Calu3 (cell line): ENCODE measurements at regions of chr20 and their contacts with region 1.

Region 1: GRCh38 chr20:58944589-58945008 is 36.5 kb upstream of the NELFCD start:
- DNase-seq: peak; percentile 80
- H3K4me3 Mint-ChIP-seq: peak overlapping the region; percentile 37
- H3K27ac Mint-ChIP-seq: peak overlapping the region; percentile 87
- H3K4me1 Mint-ChIP-seq: peaks cover 15% of the 10 kb centered on the region
- H3K27me3 Mint-ChIP-seq: no peaks in the 10 kb centered on the region
- CTCF ChIP-seq: no peak

Region 2: GRCh38 chr20:58650776-58651558 is 293.6 kb before region 1 on chr20 and contains the start of gene STX16:
- CTCF ChIA-PET with region 1: no interaction called
- intact Hi-C with region 1: no loop called
- DNase-seq: peak; percentile 96
- H3K4me3 Mint-ChIP-seq: peak within 1 kb of the TSS; percentile 97
- H3K27ac Mint-ChIP-seq: peak within 1 kb of the TSS; percentile 83
- H3K4me1 Mint-ChIP-seq: peaks cover 19% of the 10 kb centered on the region
- H3K27me3 Mint-ChIP-seq: no peaks in the 10 kb centered on the region
- CTCF ChIP-seq: peak; percentile 96
- total RNA-seq, gene STX16: 86.0 and 99.7 TPM in 2 replicates

Region 3: DNA sequence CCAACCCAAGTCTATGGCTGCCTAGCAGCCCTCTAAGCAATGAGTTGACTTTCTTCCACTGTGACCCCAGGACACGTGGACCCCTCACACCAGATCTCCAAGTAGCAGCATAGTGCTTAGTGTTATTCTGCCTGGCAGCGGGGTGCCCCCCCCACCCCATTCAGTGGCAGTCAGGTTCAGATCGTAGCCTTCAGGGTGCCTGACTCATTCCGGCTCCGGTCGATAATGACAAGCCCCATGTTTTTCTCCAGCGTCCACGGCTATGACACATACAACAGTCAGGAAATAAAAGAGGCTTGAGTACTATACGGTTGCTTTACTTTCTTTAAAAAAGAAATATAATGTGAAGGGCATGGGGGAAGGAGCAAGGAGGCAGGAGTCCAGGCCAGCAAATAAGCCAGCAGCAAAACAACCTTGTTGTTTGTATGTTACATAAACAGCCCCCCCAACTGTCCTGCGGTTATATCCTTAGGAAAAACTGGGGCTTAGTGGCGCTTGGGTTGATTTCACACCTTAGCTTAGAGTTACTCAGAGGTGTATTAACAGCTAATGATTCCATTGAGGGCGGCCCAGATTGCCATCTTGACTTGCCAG is 69.0 kb before region 1 on chr20:
- CTCF ChIA-PET with region 1: no interaction called
- intact Hi-C with region 1: loop called (anchors 1 kb)
- DNase-seq: peak; percentile 88
- H3K4me3 Mint-ChIP-seq: peak overlapping the region; percentile 29
- H3K27ac Mint-ChIP-seq: peak overlapping the region; percentile 64
- H3K4me1 Mint-ChIP-seq: peaks cover 22% of the 10 kb centered on the region
- H3K27me3 Mint-ChIP-seq: no peaks in the 10 kb centered on the region
- CTCF ChIP-seq: no peak

Region 4: DNA sequence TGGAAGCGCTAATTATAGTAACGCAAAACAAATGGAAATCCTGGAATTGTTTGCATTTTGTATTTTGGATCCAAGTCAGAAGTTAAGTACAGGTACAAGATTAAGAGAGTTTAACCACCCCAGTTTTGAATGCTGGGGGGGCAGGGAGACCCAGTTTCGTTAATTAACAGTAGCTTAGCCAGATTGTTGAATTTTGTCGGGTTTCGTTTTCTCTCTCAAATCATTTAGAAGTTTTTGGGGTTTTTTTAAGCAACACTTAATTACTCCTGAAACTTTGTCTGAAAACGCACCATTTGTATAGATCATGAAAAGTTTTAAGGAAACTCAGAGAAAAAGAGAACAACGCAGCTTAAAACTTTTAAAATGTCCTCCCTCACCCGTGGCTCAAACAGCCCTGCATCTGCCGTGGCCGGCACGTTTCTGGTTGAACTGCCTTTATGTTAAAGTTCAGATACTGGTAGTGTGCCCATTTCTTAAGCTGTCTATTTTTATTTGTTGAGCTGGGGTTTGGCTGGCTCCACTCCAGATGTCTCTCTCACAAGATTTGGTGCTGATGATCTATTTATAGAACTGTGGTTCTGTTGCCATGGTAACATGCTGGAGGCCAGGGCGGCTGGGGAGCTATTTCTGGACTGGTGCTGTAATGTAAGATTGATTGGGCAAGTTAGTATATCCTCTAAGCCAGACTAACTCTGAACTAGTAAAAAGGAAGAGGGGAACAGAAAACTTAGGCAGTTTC is 37.0 kb before region 1 on chr20:
- CTCF ChIA-PET with region 1: no interaction called
- intact Hi-C with region 1: loop called (anchors 5 kb)
- DNase-seq: peak; percentile 58
- H3K4me3 Mint-ChIP-seq: peak overlapping the region; percentile 5
- H3K27ac Mint-ChIP-seq: peak overlapping the region; percentile 58
- H3K4me1 Mint-ChIP-seq: peaks cover 17% of the 10 kb centered on the region
- H3K27me3 Mint-ChIP-seq: no peaks in the 10 kb centered on the region
- CTCF ChIP-seq: no peak